Activated CD4-positive, alpha-beta memory T cell treated with anti-CD3 and anti-CD28 coated beads, Interleukin-2, amount 10 ng/mL, durations not matched to agents 7 days and 5 days (primary cell): ENCODE measurements at regions of chr20 and their contacts with region 1.

Region 1: DNA sequence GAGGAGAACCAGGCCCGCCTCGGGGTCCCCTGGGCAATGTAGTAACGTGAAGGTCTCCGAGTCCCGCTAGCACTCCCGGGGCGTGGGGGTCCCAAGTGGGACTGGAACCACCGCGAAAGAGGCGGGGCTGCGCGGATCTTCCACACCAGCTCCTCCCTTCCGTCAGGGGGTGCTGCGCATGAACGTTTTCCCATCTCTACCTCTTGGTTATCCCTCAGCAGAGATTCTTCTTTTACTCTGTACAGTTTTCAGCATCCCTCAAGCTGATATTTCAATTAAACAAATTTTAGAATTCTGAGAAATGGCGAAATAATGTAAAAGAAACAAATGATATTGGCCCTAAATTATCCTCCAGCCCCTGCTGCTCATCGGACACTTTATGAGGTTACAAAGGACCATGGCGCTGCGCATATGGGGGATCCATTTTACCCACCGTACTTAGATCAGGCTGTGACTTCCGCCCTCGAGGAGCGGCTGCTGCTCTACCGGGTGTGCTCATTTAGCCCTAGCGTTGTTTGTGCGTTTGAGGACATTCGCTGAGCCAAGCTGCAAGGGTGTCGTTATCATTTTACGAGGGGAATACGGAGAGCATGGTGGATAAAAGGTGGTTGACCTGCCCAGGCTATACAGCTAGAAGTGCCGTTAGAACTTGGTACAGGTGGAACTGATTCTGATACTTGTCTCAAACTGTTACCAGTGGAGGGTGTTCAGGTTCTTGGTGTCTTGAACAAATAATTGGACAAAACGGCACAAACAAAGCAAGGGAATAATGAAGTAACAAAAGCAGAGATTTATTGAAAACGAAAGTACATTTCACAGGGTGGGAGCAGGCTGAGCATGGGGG is 75.2 kb upstream of the CHD6 start:
- DNase-seq: peak; percentile 83
- H3K4me3 Mint-ChIP-seq: peak overlapping the region; percentile 90
- H3K27ac Mint-ChIP-seq: peak overlapping the region; percentile 91
- H3K4me1 Mint-ChIP-seq: peaks cover 30% of the 10 kb centered on the region
- H3K27me3 Mint-ChIP-seq: peaks cover 2% of the 10 kb centered on the region

Region 2: GRCh38 chr20:41617931-41618806 is 75.2 kb before region 1 on chr20 and contains the start of gene CHD6:
- CTCF ChIA-PET with region 1: interaction called, 5 read pairs
- POLR2A ChIA-PET with region 1: interaction called, 21 read pairs
- DNase-seq: peak; percentile 100
- H3K4me3 Mint-ChIP-seq: peak within 1 kb of the TSS; percentile 85
- H3K27ac Mint-ChIP-seq: peak within 1 kb of the TSS; percentile 76
- H3K4me1 Mint-ChIP-seq: peaks cover 33% of the 10 kb centered on the region
- H3K27me3 Mint-ChIP-seq: peaks cover 6% of the 10 kb centered on the region
- total RNA-seq, gene CHD6: 28.0 to 30.3 TPM

Region 3: GRCh38 chr20:41672282-41672681 is 21.1 kb before region 1 on chr20:
- CTCF ChIA-PET with region 1: no interaction called
- POLR2A ChIA-PET with region 1: no interaction called
- DNase-seq: no peak
- H3K4me3 Mint-ChIP-seq: no peak overlapping the region
- H3K27ac Mint-ChIP-seq: no peak overlapping the region
- H3K4me1 Mint-ChIP-seq: no peaks in the 10 kb centered on the region
- H3K27me3 Mint-ChIP-seq: peaks cover 24% of the 10 kb centered on the region